ENCODE measurements at regions of chr15 and their contacts with region 1.

Region 1: GRCh38 chr15:57017024-57017423 is 98.6 kb downstream of the TCF12 start:
- DNase-seq: peak; percentile 44
- H3K4me3 ChIP-seq: no peak overlapping the region
- H3K27ac ChIP-seq: no peak overlapping the region
- H3K4me1 ChIP-seq: peaks cover 6% of the 10 kb centered on the region
- H3K27me3 ChIP-seq: no peaks in the 10 kb centered on the region
- CTCF ChIP-seq: peak in 1 of 2 donors; percentile 12
- POLR2A ChIP-seq: no peak

Region 2: DNA sequence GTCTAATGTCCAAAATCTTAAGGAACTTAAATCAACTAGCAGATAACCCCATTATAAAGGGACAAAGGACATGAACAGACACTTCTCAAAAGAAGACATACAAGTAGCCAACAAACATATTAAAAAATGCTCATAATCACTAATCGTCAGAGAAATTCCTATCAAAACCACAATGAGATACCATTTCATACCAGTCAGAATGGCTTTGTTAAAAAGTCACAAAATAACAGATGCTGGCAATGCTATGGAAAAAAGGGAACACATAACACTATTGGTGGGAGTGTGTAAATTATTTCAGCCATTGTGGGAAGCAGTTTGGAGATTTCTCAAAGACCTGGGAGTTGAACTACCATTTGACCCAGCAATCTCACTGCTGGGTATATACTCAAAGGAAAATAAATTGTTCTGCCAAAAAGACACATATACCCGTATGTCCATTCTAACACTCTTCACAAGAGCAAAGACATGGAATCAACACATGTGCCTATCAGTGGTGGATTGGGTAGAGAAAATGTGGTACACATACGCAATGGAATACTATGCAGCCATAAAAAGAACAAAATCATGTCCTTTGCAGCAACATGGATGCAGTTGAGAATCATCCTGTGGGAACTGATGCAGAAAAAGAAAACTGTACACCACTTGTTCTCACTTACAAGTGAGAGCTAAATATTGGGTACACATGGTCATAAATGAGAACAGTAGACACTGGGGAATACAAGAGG is 20.1 kb before region 1 on chr15:
- CTCF ChIA-PET with region 1: no interaction called
- POLR2A ChIA-PET with region 1: no interaction called
- dilution Hi-C with region 1: no loop called
- intact Hi-C with region 1: no loop called
- DNase-seq: no peak
- H3K4me3 ChIP-seq: no peak overlapping the region
- H3K27ac ChIP-seq: no peak overlapping the region
- H3K4me1 ChIP-seq: no peaks in the 10 kb centered on the region
- H3K27me3 ChIP-seq: no peaks in the 10 kb centered on the region
- CTCF ChIP-seq: no peak
- POLR2A ChIP-seq: no peak

Region 3: DNA sequence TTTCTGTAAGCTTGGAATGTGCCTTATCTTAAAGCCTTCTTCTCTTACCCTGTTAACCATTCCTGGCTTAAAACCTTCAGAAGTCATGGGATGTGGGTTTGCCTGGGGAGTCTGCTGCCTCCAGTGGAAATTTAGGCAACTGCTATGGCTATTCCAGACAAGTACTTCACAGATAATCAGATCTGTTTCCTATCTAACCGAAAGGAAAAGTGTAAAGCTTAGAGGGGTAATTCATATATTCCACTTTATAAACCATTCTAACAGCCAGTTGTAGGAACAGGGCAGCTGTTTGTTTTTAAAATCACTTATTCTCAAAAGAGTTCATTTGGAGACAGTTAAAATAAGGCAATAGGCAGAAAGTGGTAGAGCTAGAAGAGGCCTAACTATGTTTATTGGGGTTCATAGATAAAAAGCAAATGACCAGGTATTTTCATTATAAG is 121.3 kb after region 1 on chr15:
- CTCF ChIA-PET with region 1: interaction called, 5 read pairs
- POLR2A ChIA-PET with region 1: no interaction called
- dilution Hi-C with region 1: no loop called
- intact Hi-C with region 1: loop called (anchors 2 kb)
- DNase-seq: peak; percentile 75
- H3K4me3 ChIP-seq: no peak overlapping the region
- H3K27ac ChIP-seq: no peak overlapping the region
- H3K4me1 ChIP-seq: peaks cover 33% of the 10 kb centered on the region
- H3K27me3 ChIP-seq: no peaks in the 10 kb centered on the region
- CTCF ChIP-seq: peak; percentile 61 to 74
- POLR2A ChIP-seq: no peak

Measured in endothelial cell of umbilical vein (primary cell).